Caco-2 (cell line): ENCODE measurements at regions of chr15 and their contacts with region 1.

Region 1: GRCh38 chr15:42226648-42227047 is 18.5 kb upstream of the VPS39 start:
- DNase-seq: no peak
- H3K4me3 ChIP-seq: no peak overlapping the region
- H3K4me3 Mint-ChIP-seq: no peak overlapping the region
- H3K27ac Mint-ChIP-seq: no peak overlapping the region
- H3K4me1 ChIP-seq: no peaks in the 10 kb centered on the region
- H3K4me1 Mint-ChIP-seq: no peaks in the 10 kb centered on the region
- H3K27me3 ChIP-seq: no peaks in the 10 kb centered on the region
- H3K27me3 Mint-ChIP-seq: no peaks in the 10 kb centered on the region
- CTCF ChIP-seq: no peak

Region 2: GRCh38 chr15:42385206-42385979 is 158.7 kb after region 1 on chr15:
- CTCF ChIA-PET with region 1: interaction called, 5 read pairs
- POLR2A ChIA-PET with region 1: no interaction called
- intact Hi-C with region 1: loop called (anchors 10 kb)
- DNase-seq: peak; percentile 59 to 72
- H3K4me3 ChIP-seq: no peak overlapping the region
- H3K4me3 Mint-ChIP-seq: no peak overlapping the region
- H3K27ac Mint-ChIP-seq: no peak overlapping the region
- H3K4me1 ChIP-seq: peaks cover 4% of the 10 kb centered on the region; the same call in 1 of the 2 replicates
- H3K4me1 Mint-ChIP-seq: peaks cover 7% of the 10 kb centered on the region
- H3K27me3 ChIP-seq: no peaks in the 10 kb centered on the region
- H3K27me3 Mint-ChIP-seq: no peaks in the 10 kb centered on the region
- CTCF ChIP-seq: peak; percentile 60 to 76

Region 3: DNA sequence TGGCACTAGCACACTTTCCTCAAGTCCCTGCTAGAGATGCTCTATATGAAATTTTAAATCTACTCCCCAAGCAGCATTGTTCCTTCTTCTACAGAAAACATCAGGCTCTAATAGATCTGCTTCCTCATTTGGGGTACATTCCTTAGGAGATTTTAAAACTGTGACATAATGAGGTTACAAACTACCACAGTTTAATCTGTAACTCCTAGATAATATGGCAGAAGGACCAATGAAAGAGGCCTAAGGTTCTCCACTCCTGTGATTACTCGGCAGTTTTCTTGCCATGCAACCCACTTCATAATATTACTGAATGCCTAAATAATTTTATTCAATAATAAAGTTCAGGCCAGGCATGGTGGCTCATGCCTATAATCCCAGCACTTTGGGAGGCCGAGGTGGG is 248.2 kb after region 1 on chr15:
- CTCF ChIA-PET with region 1: no interaction called
- POLR2A ChIA-PET with region 1: no interaction called
- intact Hi-C with region 1: loop called (anchors 10 kb)
- DNase-seq: no peak
- H3K4me3 ChIP-seq: no peak overlapping the region
- H3K4me3 Mint-ChIP-seq: no peak overlapping the region
- H3K27ac Mint-ChIP-seq: no peak overlapping the region
- H3K4me1 ChIP-seq: no peaks in the 10 kb centered on the region
- H3K4me1 Mint-ChIP-seq: peaks cover 12% of the 10 kb centered on the region
- H3K27me3 ChIP-seq: no peaks in the 10 kb centered on the region
- H3K27me3 Mint-ChIP-seq: no peaks in the 10 kb centered on the region
- CTCF ChIP-seq: no peak